PC-9 (cell line): ENCODE measurements at regions of chr7 and their contacts with region 1.

Region 1: GRCh38 chr7:123797673-123798527 is 47.1 kb upstream of the HYAL4 start:
- DNase-seq: peak; percentile 45 to 99
- H3K4me3 ChIP-seq: peak overlapping the region; percentile 40; the same call in 1 of the 2 replicates
- H3K27ac ChIP-seq: peak overlapping the region; percentile 43
- H3K4me1 ChIP-seq: peaks cover 11% of the 10 kb centered on the region
- H3K27me3 ChIP-seq: no peaks in the 10 kb centered on the region
- CTCF ChIP-seq: peak; percentile 83

Region 2: GRCh38 chr7:123534383-123535260 is 263.3 kb before region 1 on chr7 and contains the start of gene IQUB:
- CTCF ChIA-PET with region 1: no interaction called
- POLR2A ChIA-PET with region 1: no interaction called
- intact Hi-C with region 1: loop called (anchors 1 kb)
- DNase-seq: peak; percentile 82 to 97
- H3K4me3 ChIP-seq: peak within 1 kb of the TSS; percentile 96
- H3K27ac ChIP-seq: no peak within 1 kb of the TSS
- H3K4me1 ChIP-seq: peaks cover 23% of the 10 kb centered on the region
- H3K27me3 ChIP-seq: no peaks in the 10 kb centered on the region
- CTCF ChIP-seq: no peak
- total RNA-seq, gene IQUB: 0.33 and 0.98 TPM in 2 replicates

Region 3: DNA sequence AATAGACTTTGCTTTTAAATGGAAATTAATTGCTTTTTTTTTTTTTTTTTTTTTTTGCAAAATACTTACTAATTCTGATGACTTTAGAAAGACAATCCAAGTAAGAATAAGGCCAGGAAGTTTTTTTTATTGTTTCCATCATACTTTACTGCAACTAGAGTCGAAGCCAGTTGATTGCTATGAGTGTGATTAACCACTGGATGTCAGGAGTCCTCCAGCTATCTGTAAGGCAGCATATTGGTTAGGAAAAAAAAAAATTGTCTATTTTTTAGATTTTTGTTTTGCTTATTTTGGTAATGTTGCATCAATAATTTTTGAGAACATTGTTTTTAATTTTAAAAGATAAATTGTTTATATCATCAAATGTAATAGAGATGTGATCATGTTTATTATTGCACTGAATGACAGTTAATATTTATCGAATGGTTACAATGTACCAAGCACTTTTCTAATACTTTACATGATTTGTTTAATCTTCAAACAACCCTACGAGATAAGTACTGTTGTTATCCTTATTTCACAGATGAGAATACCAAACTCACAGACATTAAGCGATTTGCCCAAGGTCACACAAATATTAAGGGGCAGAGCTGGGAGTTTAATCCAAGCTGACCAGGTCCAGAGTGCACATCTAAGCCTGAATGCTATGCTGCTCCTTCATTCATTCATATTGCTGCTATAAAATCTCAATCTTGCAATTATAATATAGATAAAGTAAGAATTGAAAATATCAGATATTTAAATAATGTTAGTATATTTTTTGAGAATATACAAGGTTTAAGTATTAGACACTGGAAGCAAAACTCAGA is 162.1 kb before region 1 on chr7:
- CTCF ChIA-PET with region 1: no interaction called
- POLR2A ChIA-PET with region 1: interaction called, 3 read pairs
- intact Hi-C with region 1: loop called (anchors 5 kb)
- DNase-seq: no peak
- H3K4me3 ChIP-seq: no peak overlapping the region
- H3K27ac ChIP-seq: no peak overlapping the region
- H3K4me1 ChIP-seq: peaks cover 18% of the 10 kb centered on the region
- H3K27me3 ChIP-seq: no peaks in the 10 kb centered on the region
- CTCF ChIP-seq: peak; percentile 69

Region 4: DNA sequence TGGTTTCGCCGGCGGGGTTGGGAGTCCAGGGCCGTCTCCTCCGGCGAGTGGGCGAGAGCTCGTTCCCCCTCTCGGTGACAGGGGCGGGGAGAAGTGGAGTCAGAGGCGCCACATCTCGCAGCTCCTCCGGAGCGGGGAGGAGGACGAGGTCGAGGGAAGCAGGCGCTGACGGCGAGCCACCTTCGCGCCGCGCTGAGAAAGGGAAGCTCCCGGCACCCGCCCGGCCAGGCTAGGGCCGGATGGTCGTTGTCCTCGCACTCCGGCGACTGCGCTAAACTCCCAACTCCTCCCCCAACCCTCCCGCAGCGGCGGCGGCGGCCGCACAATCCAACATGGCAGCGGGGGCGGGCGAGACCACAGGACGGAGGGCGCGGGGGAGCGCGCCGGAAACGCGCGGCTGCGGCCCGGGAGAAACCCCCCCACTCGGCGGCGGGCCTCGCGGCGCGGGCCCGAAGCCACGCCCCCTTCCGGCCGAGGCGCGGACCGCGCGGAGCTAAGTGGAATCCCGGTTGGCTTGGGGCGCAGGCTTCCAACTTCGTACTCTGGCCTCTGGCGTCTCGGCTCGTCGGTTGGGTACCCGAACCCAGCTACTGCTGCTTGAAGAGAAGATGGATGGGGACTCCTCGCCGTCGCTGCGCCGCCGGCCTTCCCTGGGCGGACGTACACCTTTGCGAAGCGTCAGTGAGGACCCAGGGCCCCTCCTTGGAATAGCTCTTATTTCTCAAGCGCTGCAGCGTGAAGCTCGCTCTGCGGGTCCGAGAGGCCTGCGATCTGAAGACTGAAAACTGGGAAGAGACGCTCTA is 49.0 kb before region 1 on chr7 and contains the start of gene WASL:
- CTCF ChIA-PET with region 1: no interaction called
- POLR2A ChIA-PET with region 1: no interaction called
- intact Hi-C with region 1: loop called (anchors 1 kb)
- DNase-seq: peak; percentile 66 to 95
- H3K4me3 ChIP-seq: peak within 1 kb of the TSS; percentile 89
- H3K27ac ChIP-seq: peak within 1 kb of the TSS; percentile 93
- H3K4me1 ChIP-seq: peaks cover 40% of the 10 kb centered on the region
- H3K27me3 ChIP-seq: no peaks in the 10 kb centered on the region
- CTCF ChIP-seq: peak; percentile 40
- total RNA-seq, gene WASL: 31.4 and 40.3 TPM in 2 replicates

Region 5: DNA sequence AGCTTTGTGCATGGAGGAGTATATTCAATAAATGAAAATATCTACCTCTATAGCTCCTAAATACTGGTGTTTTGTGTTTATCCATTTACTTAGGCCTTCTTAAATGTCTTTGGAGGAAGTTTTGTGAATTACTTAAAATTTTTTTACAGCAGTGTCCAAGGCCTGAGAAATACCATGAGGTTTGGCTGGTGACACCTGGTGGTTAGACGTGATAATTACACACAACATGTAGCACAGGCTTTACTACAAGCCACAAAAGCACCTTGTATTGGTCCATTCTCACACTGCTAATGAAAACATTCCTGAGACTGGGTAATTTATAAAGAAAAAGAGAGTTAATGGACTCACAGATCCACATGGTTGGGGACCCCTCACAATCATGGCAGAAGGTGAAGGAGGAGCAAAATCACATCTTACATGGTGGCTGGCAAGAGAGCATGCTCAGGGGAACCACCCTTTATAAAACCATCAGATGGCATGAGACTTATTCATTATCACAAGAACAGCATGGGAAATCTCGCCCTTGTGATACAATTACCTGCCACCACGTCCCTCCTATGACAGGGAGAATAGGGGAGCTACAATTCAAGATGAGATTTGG is 67.7 kb after region 1 on chr7:
- CTCF ChIA-PET with region 1: interaction called, 10 read pairs
- POLR2A ChIA-PET with region 1: no interaction called
- intact Hi-C with region 1: loop called (anchors 1 kb)
- DNase-seq: peak; percentile 41 to 51
- H3K4me3 ChIP-seq: no peak overlapping the region
- H3K27ac ChIP-seq: no peak overlapping the region
- H3K4me1 ChIP-seq: peaks cover 6% of the 10 kb centered on the region; the same call in 1 of the 2 replicates
- H3K27me3 ChIP-seq: no peaks in the 10 kb centered on the region
- CTCF ChIP-seq: peak; percentile 87

Region 6: DNA sequence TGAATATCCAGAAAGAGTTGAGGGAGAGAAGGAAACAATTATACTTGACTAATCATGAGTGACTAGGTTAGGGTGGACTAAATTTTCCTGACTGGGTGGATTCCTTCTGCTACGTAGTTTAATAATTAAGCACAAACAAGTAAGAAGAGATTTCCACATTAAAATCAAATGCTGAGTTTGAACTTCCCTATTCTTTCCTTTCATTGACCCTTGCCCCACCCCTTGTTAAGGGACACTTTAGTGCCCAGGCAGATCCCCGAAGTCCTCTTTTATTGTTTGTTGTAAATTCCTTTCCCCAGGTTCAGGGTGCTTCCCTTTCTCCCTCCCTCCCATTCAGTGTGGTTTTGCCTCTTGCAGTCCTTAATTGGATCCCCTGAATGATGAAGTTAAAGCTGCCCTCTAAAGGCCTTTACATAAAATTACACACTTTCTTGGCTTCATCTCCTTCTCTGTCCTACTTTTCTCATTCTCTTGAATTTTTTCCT is 118.4 kb after region 1 on chr7:
- CTCF ChIA-PET with region 1: no interaction called
- POLR2A ChIA-PET with region 1: no interaction called
- intact Hi-C with region 1: loop called (anchors 5 kb)
- DNase-seq: no peak
- H3K4me3 ChIP-seq: no peak overlapping the region
- H3K27ac ChIP-seq: no peak overlapping the region
- H3K4me1 ChIP-seq: no peaks in the 10 kb centered on the region
- H3K27me3 ChIP-seq: no peaks in the 10 kb centered on the region
- CTCF ChIP-seq: peak; percentile 54; the same call in 1 of the 2 replicates

Region 7: DNA sequence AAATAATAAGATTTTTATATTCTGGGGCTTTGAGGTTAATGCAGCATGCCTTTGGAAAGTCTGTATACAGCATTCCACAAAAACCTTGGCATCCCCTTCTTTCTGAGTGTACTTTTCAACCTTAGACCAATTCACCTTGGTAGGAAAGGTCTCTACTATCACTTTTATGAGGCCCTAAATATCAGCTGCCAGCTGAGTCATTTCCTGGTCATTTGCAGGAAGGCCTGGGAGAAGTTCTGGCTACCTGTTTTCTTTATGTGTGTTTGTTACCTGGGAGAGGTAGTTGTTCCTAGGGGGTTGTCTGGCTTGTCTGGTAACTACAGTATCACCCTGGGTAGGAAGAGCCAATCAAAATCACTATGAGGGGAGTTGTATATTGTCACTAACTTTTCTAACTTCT is 131.2 kb after region 1 on chr7:
- CTCF ChIA-PET with region 1: no interaction called
- POLR2A ChIA-PET with region 1: no interaction called
- intact Hi-C with region 1: no loop called
- DNase-seq: peak; percentile 34 to 70
- H3K4me3 ChIP-seq: no peak overlapping the region
- H3K27ac ChIP-seq: peak overlapping the region; percentile 33
- H3K4me1 ChIP-seq: peaks cover 13% of the 10 kb centered on the region
- H3K27me3 ChIP-seq: no peaks in the 10 kb centered on the region
- CTCF ChIP-seq: no peak

Region 8: DNA sequence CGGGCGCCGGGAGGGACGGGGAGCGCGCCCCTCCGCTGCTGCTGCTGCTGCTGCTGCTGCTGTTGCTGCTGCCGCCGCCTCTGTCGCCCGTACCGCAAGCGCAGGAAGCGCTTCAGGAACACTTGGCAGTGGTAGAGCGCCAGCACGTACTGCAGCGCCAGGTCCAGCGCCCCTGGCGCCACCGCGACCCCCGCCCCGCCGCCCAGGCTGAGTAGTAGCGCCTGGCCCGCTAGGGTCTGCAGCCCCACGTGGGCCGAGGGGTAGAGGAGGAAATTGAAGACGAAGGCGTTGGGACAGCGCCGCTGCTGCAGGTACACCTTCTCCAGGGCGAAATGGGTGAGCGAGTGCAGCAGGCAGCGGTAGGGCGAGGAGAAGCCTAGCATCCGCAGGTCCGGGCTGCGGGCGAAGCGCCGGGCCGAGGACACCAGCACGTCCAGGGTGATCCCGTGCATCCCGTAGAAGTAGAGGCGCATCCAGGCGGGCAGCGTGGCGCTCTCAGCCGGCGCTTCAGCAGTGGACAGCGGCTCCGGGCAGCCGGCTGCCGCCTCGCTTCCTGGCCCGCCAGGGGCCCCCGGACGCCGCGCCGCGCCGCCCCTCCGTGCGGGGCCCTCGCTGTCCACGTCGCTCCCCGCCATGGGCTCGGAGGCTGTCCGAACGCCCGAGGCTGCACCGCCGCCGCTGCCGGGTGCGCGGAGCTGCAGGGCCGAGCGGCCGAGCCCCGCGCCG is 234.6 kb after region 1 on chr7 and contains the start of gene TMEM229A:
- CTCF ChIA-PET with region 1: no interaction called
- POLR2A ChIA-PET with region 1: no interaction called
- intact Hi-C with region 1: no loop called
- DNase-seq: no peak
- H3K4me3 ChIP-seq: no peak within 1 kb of the TSS
- H3K27ac ChIP-seq: no peak within 1 kb of the TSS
- H3K4me1 ChIP-seq: no peaks in the 10 kb centered on the region
- H3K27me3 ChIP-seq: no peaks in the 10 kb centered on the region
- CTCF ChIP-seq: no peak
- total RNA-seq, gene TMEM229A: not detected in 2 replicates

Region 9: DNA sequence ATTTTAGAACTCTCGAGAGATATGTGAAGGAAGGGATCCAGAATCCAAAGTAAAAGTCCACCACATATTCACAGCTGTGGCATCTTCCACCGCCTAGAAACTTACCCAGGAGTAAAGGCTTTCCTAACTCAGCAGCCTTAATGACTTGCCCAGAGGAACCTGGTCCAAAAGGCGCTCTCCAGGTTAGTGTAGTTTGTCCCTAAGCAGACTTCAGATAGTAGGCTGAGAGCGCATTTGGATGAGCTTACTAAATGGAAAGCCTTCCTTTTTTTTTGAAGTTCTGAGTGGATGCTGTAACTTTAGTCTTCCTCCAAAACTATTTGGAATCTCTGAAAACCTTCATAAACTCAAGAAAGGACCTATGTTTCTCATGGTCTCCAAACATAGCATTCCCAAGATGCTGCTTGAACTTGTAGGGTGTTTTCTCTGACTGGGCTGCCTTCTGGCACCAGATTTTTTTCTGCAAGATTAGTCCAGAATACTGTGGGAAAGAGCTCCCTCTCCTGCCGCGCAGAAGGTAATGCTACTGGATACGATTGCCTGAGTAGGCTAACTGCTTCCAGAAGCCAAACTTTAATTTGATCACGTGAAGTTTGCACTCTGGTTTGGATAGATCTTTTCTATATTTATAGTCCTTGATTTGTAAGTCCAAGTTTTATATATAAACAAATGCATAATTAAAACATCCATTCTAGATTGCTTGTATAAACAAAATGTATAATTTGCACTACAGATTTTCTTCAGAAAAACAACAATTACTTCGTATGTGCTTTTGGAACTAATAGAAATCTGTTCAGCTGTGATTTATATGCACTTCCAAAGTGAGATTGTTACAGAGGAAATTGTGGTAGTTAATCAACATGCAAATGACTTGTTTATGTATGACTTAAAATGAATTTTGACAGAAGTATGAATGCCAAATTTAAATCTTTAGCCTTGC is 987.2 kb after region 1 on chr7:
- CTCF ChIA-PET with region 1: no interaction called
- POLR2A ChIA-PET with region 1: no interaction called
- intact Hi-C with region 1: loop called (anchors 1 kb)
- DNase-seq: peak in 1 of 2 experiments; percentile 45
- H3K4me3 ChIP-seq: no peak overlapping the region
- H3K27ac ChIP-seq: no peak overlapping the region
- H3K4me1 ChIP-seq: no peaks in the 10 kb centered on the region
- H3K27me3 ChIP-seq: no peaks in the 10 kb centered on the region
- CTCF ChIP-seq: peak; percentile 88